Ovary (tissue), 10 donors: ENCODE measurements at regions of chr3 and their contacts with region 1.

Region 1: DNA sequence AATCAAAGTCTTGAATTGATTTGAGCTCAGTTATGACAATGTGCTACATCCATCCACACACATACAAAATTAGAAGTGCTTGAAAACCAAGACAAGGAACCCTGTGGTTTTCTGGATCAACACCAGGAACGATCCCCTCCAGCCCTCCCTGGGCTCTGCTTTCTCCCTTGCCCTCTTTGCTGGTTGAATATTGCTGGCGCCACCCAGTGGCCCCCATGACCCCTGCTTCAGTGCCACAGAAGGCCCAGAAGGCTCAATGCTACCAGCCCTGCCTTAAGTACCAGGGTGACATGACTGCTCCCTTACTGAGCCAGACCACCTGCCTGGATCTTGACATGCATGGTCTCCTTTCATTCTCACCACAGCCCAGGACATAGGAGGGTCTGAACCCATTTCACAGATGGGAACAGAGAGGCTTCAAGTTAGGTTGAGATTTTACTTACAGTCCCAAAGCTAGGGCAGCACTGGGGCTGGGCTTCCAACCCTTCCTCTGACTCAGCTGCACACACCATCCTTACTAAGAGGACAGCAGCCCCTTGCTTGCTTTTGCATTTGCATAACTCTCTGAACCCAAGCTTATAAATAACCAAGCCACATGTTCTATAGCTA is 15.0 kb downstream of the IL12A start:
- DNase-seq: peak in 1 of 5 donors; percentile 13
- H3K4me3 ChIP-seq: no peak overlapping the region
- H3K27ac ChIP-seq: no peak overlapping the region
- H3K4me1 ChIP-seq: no peaks in the 10 kb centered on the region
- H3K27me3 ChIP-seq: no peaks in the 10 kb centered on the region
- CTCF ChIP-seq: no peak
- EP300 ChIP-seq: no peak
- POLR2A ChIP-seq: no peak

Region 2: GRCh38 chr3:159813822-159814523 is 189.7 kb before region 1 on chr3:
- intact Hi-C with region 1: loop called in 1 of 4 experiments (anchors 10 kb)
- DNase-seq: no peak
- H3K4me3 ChIP-seq: no peak overlapping the region
- H3K27ac ChIP-seq: no peak overlapping the region
- H3K4me1 ChIP-seq: no peaks in the 10 kb centered on the region
- H3K27me3 ChIP-seq: no peaks in the 10 kb centered on the region
- CTCF ChIP-seq: no peak
- EP300 ChIP-seq: no peak
- POLR2A ChIP-seq: no peak

Region 3: DNA sequence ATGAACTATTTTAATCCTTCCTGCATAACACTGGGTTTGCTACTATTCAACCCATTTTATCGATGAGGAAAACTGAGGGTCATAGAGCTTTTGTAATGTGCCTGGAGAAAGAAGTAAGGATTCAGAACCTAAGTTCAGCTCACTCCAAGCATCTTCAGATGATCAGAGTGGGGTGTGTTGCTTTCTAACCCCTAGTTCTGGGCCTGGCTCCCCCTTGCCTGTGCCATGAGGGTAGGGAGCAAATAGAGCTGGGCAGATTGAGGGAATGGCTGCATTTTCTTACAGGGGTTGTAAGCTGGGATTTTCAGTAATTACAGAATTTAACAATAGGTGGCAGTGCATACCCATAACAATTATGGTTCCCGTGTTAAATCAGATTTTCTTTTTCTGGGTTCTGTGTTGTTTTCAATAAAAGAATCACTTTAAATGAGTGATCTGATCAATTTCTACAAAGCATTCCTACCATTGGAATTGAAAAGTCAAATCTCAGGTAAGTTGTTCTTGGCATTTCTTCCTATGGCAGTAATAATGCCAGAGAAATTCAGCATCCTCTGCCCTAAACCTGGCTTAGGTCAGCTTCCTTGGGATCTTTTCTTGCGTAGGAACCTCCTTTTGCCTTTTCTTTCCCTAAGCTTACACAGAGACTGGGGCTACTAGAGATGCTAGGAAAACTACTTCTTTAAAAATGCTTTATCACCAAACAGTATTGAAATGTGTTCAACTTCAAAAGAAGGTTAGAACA is 118.8 kb before region 1 on chr3:
- intact Hi-C with region 1: loop called in 3 of 4 experiments (anchors 10 kb)
- DNase-seq: no peak
- H3K4me3 ChIP-seq: no peak overlapping the region
- H3K27ac ChIP-seq: no peak overlapping the region
- H3K4me1 ChIP-seq: peaks cover 3% of the 10 kb centered on the region
- H3K27me3 ChIP-seq: no peaks in the 10 kb centered on the region
- CTCF ChIP-seq: peak; percentile 19 to 27 (median 19)
- EP300 ChIP-seq: no peak
- POLR2A ChIP-seq: no peak

Region 4: GRCh38 chr3:159941038-159941944 is 62.3 kb before region 1 on chr3:
- intact Hi-C with region 1: no loop called
- DNase-seq: no peak
- H3K4me3 ChIP-seq: no peak overlapping the region
- H3K27ac ChIP-seq: no peak overlapping the region
- H3K4me1 ChIP-seq: no peaks in the 10 kb centered on the region
- H3K27me3 ChIP-seq: no peaks in the 10 kb centered on the region
- CTCF ChIP-seq: no peak
- EP300 ChIP-seq: no peak
- POLR2A ChIP-seq: no peak

Region 5: GRCh38 chr3:160180581-160181216 is 177.1 kb after region 1 on chr3:
- intact Hi-C with region 1: no loop called
- DNase-seq: no peak
- H3K4me3 ChIP-seq: no peak overlapping the region
- H3K27ac ChIP-seq: no peak overlapping the region
- H3K4me1 ChIP-seq: no peaks in the 10 kb centered on the region
- H3K27me3 ChIP-seq: no peaks in the 10 kb centered on the region
- CTCF ChIP-seq: no peak
- EP300 ChIP-seq: no peak
- POLR2A ChIP-seq: no peak

Region 6: DNA sequence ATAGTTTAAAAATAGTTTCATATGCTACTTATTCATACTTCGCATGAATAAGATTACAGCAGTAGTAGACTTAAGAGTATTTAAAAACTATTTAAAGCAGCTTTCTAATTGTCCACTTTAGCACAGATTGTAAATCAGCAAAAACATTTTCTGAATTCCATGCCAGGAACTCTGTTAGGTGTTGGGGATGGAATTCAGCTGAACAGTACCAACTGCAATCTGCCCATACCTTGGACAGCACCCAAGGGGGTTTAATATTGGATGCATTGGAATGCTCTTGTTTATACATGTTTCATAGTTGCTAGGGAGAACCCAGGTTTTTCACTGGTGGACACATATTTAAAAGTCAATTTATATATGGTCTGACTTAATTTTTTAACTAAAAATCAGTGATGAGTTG is 827.2 kb after region 1 on chr3:
- intact Hi-C with region 1: no loop called
- DNase-seq: no peak
- H3K4me3 ChIP-seq: no peak overlapping the region
- H3K27ac ChIP-seq: no peak overlapping the region
- H3K4me1 ChIP-seq: no peaks in the 10 kb centered on the region
- H3K27me3 ChIP-seq: no peaks in the 10 kb centered on the region
- CTCF ChIP-seq: no peak
- EP300 ChIP-seq: no peak
- POLR2A ChIP-seq: no peak

Region 7: GRCh38 chr3:161083131-161083530 is 1079.5 kb after region 1 on chr3:
- intact Hi-C with region 1: no loop called
- DNase-seq: no peak
- H3K4me3 ChIP-seq: no peak overlapping the region
- H3K27ac ChIP-seq: no peak overlapping the region
- H3K4me1 ChIP-seq: peaks cover 2% of the 10 kb centered on the region
- H3K27me3 ChIP-seq: no peaks in the 10 kb centered on the region
- CTCF ChIP-seq: no peak
- EP300 ChIP-seq: no peak
- POLR2A ChIP-seq: no peak